ENCODE measurements at regions of chr7 and their contacts with region 1.

Region 1: GRCh38 chr7:82044497-82045080 is 274.7 kb upstream of the HGF start:
- DNase-seq: peak; percentile 11 to 54 (median 17)
- ATAC-seq: peak; percentile 66; the same call in 1 of the 3 replicates
- H3K4me3 ChIP-seq: no peak overlapping the region
- H3K27ac ChIP-seq: no peak overlapping the region
- H3K4me1 ChIP-seq: no peaks in the 10 kb centered on the region
- H3K27me3 ChIP-seq: no peaks in the 10 kb centered on the region
- CTCF ChIP-seq: peak; percentile 22 to 67 (median 48); a peak in 5 of 6 replicates
- EP300 ChIP-seq: no peak
- POLR2A ChIP-seq: no peak
- RAD21 ChIP-seq: peak; percentile 77 to 80

Region 2: GRCh38 chr7:81482600-81483186 is 561.9 kb before region 1 on chr7:
- CTCF ChIA-PET with region 1: no interaction called
- POLR2A ChIA-PET with region 1: no interaction called
- in situ Hi-C with region 1: no loop called
- intact Hi-C with region 1: loop called (anchors 10 kb)
- DNase-seq: peak; percentile 15 to 32 (median 24)
- ATAC-seq: peak; percentile 51; the same call in 1 of the 3 replicates
- H3K4me3 ChIP-seq: no peak overlapping the region
- H3K27ac ChIP-seq: no peak overlapping the region
- H3K4me1 ChIP-seq: no peaks in the 10 kb centered on the region
- H3K27me3 ChIP-seq: no peaks in the 10 kb centered on the region
- CTCF ChIP-seq: peak in 2 of 3 experiments; percentile 16 to 66; a peak in 3 of 6 replicates
- EP300 ChIP-seq: no peak
- POLR2A ChIP-seq: no peak
- RAD21 ChIP-seq: peak; percentile 57 to 70

Region 3: GRCh38 chr7:81986723-81987470 is 57.7 kb before region 1 on chr7:
- CTCF ChIA-PET with region 1: no interaction called
- POLR2A ChIA-PET with region 1: no interaction called
- in situ Hi-C with region 1: no loop called
- intact Hi-C with region 1: no loop called
- DNase-seq: no peak
- ATAC-seq: no peak
- H3K4me3 ChIP-seq: no peak overlapping the region
- H3K27ac ChIP-seq: no peak overlapping the region
- H3K4me1 ChIP-seq: no peaks in the 10 kb centered on the region
- H3K27me3 ChIP-seq: no peaks in the 10 kb centered on the region
- CTCF ChIP-seq: no peak
- EP300 ChIP-seq: no peak
- POLR2A ChIP-seq: no peak
- RAD21 ChIP-seq: no peak

Region 4: DNA sequence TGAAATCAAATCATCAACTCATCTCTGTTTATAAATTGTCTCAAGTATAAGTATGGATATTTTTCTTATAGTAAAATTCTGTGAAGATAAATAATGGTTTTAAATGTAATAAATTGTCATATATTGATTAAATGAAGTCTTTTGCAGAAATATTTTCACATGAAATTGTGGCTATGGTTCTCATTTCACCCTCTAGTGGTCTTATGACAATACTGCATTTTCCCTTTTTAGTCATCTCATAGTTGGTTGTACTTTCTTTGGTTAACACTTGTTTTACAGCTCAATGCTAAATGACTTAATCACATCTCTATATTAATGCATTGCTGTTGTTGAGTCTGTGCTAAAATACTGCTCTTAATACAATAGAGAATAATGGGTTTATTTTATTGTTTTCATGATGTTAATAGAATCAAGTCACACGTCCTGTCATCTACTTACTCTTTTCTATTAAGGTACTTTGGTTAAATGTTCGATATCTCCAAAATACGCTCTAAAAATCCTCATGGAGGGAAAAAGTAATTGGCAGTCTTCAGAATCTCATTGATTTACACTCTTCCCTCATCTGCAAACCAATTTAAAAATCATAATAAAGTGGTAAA is 437.0 kb after region 1 on chr7:
- CTCF ChIA-PET with region 1: no interaction called
- POLR2A ChIA-PET with region 1: no interaction called
- in situ Hi-C with region 1: no loop called
- intact Hi-C with region 1: loop called (anchors 10 kb)
- DNase-seq: peak in 2 of 4 experiments; percentile 2 to 10
- ATAC-seq: no peak
- H3K4me3 ChIP-seq: no peak overlapping the region
- H3K27ac ChIP-seq: no peak overlapping the region
- H3K4me1 ChIP-seq: no peaks in the 10 kb centered on the region
- H3K27me3 ChIP-seq: no peaks in the 10 kb centered on the region
- CTCF ChIP-seq: peak in 2 of 3 experiments; percentile 16 to 31; a peak in 2 of 6 replicates
- EP300 ChIP-seq: no peak
- POLR2A ChIP-seq: no peak
- RAD21 ChIP-seq: peak in 1 of 2 experiments; percentile 34; a peak in 3 of 4 replicates

Region 5: DNA sequence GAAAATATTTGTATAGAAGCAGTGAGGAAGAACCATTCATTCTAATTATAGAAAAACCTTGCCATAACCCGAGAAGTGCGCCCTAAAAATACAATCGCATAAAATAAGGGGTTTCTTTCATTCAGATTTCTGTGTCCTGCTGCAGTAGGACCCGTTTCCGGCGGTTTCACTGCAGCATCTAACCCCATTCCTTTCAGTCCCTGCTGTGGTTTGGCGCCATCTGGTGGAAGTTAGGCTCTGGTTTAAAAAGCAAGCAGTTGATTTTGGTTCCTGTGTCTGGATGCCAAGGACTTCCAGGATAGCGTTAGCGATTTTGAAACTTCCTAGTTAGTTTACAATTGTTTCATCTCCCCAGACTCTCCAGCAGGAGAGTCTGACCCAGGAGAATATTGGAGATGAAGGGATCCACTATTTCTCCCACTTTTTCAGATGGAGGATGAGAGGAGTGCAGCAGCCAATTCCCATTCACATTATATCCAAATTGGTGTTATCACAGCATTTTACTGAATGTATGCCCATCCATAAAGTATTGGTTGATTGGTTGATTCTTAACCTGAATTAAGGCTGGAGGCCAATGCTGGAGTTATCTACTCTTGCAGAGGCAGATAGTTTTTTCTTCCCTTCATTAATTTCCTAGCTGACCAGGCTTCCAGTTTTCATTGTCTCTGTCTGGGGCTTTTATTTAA is 527.7 kb after region 1 on chr7:
- CTCF ChIA-PET with region 1: interaction called, 9 read pairs
- POLR2A ChIA-PET with region 1: no interaction called
- in situ Hi-C with region 1: loop called (anchors 25 kb)
- intact Hi-C with region 1: loop called (anchors 1 kb)
- DNase-seq: peak; percentile 60 to 74 (median 64)
- ATAC-seq: peak; percentile 78
- H3K4me3 ChIP-seq: no peak overlapping the region
- H3K27ac ChIP-seq: no peak overlapping the region
- H3K4me1 ChIP-seq: no peaks in the 10 kb centered on the region
- H3K27me3 ChIP-seq: no peaks in the 10 kb centered on the region
- CTCF ChIP-seq: peak; percentile 64 to 69 (median 68)
- EP300 ChIP-seq: no peak
- POLR2A ChIP-seq: no peak
- RAD21 ChIP-seq: peak; percentile 42 to 72

Region 6: GRCh38 chr7:82605247-82605872 is 560.8 kb after region 1 on chr7:
- CTCF ChIA-PET with region 1: interaction called, 9 read pairs
- POLR2A ChIA-PET with region 1: no interaction called
- in situ Hi-C with region 1: no loop called
- intact Hi-C with region 1: loop called (anchors 1 kb)
- DNase-seq: peak; percentile 29 to 47 (median 43)
- ATAC-seq: 0 out of 3 replicates have a peak, but pooled peaks have one; percentile 31
- H3K4me3 ChIP-seq: no peak overlapping the region
- H3K27ac ChIP-seq: no peak overlapping the region
- H3K4me1 ChIP-seq: no peaks in the 10 kb centered on the region
- H3K27me3 ChIP-seq: no peaks in the 10 kb centered on the region
- CTCF ChIP-seq: peak; percentile 42 to 75 (median 59); a peak in 5 of 6 replicates
- EP300 ChIP-seq: no peak
- POLR2A ChIP-seq: no peak
- RAD21 ChIP-seq: peak; percentile 48 to 76

Region 7: GRCh38 chr7:82729172-82730030 is 684.8 kb after region 1 on chr7:
- CTCF ChIA-PET with region 1: no interaction called
- POLR2A ChIA-PET with region 1: no interaction called
- in situ Hi-C with region 1: no loop called
- intact Hi-C with region 1: loop called (anchors 2 kb)
- DNase-seq: peak; percentile 5 to 18 (median 14)
- ATAC-seq: no peak
- H3K4me3 ChIP-seq: no peak overlapping the region
- H3K27ac ChIP-seq: no peak overlapping the region
- H3K4me1 ChIP-seq: no peaks in the 10 kb centered on the region
- H3K27me3 ChIP-seq: no peaks in the 10 kb centered on the region
- CTCF ChIP-seq: peak in 2 of 3 experiments; percentile 27 to 46; a peak in 3 of 6 replicates
- EP300 ChIP-seq: no peak
- POLR2A ChIP-seq: no peak
- RAD21 ChIP-seq: peak; percentile 41 to 44

Measured in K562 (cell line).